ENCODE measurements at regions of chr3 and their contacts with region 1.

Region 1: DNA sequence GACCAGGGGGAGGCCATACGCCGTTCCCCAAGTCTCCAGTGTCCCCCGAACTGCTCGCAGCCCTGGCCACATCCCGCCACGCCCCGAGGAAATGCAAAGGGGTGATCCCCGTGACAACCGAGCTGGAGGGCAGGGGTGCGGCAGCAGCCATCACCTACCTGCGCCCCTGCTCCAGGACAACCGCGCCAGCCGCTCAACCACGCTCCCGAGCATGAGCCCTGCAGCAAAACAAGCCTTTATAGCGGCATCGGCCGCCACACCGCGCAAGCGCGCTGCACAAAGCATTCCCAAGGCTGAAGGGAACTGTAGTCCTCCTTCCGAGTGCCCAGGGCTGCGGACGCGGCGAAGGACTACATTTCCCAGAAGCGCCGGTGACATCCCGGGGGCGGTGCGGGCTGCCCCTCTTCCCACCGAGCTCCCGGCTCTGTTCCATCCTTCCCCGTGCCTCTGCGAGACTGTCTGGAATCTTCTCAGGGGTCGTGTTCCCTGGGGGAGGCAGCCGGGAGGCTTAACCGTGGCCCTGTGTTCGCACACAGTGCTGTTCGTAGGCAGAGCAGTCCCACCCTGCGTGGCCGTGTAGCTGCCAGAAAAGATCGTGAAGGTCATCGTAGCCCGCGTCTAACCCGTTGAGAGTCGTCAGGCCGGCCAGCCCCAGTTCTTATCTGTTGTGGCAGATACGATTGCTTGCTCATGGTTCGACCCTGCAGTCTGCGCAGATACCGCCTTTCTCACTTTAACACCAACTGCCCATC is at the start of gene ABCC5:
- DNase-seq: peak; percentile 93
- ATAC-seq: peak; percentile 99 to 100
- H3K4me3 ChIP-seq: peak within 1 kb of the TSS; percentile 100
- H3K27ac ChIP-seq: peak within 1 kb of the TSS; percentile 78
- H3K4me1 ChIP-seq: peaks cover 11% of the 10 kb centered on the region
- H3K27me3 ChIP-seq: no peaks in the 10 kb centered on the region
- CTCF ChIP-seq: peak; percentile 48
- total RNA-seq, gene ABCC5: 38.0 TPM

Region 2: GRCh38 chr3:183895296-183895695 is 122.6 kb before region 1 on chr3:
- intact Hi-C with region 1: loop called (anchors 10 kb)
- DNase-seq: no peak
- ATAC-seq: peak; percentile 82 to 88
- H3K4me3 ChIP-seq: no peak overlapping the region
- H3K27ac ChIP-seq: no peak overlapping the region
- H3K4me1 ChIP-seq: no peaks in the 10 kb centered on the region
- H3K27me3 ChIP-seq: peaks cover 9% of the 10 kb centered on the region
- CTCF ChIP-seq: peak; percentile 81